ENCODE measurements at regions of chr11 and their contacts with region 1.

Region 1: GRCh38 chr11:106276859-106277436 is 199.5 kb downstream of the AASDHPPT start:
- DNase-seq: peak; percentile 2 to 43
- H3K4me3 ChIP-seq: no peak overlapping the region
- H3K27ac ChIP-seq: no peak overlapping the region
- H3K4me1 ChIP-seq: peaks cover 26% of the 10 kb centered on the region
- H3K27me3 ChIP-seq: no peaks in the 10 kb centered on the region
- CTCF ChIP-seq: peak; percentile 69

Region 2: GRCh38 chr11:106495046-106495445 is 218.1 kb after region 1 on chr11:
- CTCF ChIA-PET with region 1: interaction called, 24 read pairs
- POLR2A ChIA-PET with region 1: no interaction called
- intact Hi-C with region 1: no loop called
- DNase-seq: peak in 1 of 2 experiments; percentile 62
- H3K4me3 ChIP-seq: no peak overlapping the region
- H3K27ac ChIP-seq: no peak overlapping the region
- H3K4me1 ChIP-seq: no peaks in the 10 kb centered on the region
- H3K27me3 ChIP-seq: no peaks in the 10 kb centered on the region
- CTCF ChIP-seq: no peak

Region 3: GRCh38 chr11:106974831-106975230 is 697.9 kb after region 1 on chr11:
- CTCF ChIA-PET with region 1: no interaction called
- POLR2A ChIA-PET with region 1: no interaction called
- intact Hi-C with region 1: loop called (anchors 10 kb)
- DNase-seq: no peak
- H3K4me3 ChIP-seq: no peak overlapping the region
- H3K27ac ChIP-seq: no peak overlapping the region
- H3K4me1 ChIP-seq: no peaks in the 10 kb centered on the region
- H3K27me3 ChIP-seq: no peaks in the 10 kb centered on the region
- CTCF ChIP-seq: no peak